ENCODE measurements at regions of chr3 and their contacts with region 1.

Region 1: DNA sequence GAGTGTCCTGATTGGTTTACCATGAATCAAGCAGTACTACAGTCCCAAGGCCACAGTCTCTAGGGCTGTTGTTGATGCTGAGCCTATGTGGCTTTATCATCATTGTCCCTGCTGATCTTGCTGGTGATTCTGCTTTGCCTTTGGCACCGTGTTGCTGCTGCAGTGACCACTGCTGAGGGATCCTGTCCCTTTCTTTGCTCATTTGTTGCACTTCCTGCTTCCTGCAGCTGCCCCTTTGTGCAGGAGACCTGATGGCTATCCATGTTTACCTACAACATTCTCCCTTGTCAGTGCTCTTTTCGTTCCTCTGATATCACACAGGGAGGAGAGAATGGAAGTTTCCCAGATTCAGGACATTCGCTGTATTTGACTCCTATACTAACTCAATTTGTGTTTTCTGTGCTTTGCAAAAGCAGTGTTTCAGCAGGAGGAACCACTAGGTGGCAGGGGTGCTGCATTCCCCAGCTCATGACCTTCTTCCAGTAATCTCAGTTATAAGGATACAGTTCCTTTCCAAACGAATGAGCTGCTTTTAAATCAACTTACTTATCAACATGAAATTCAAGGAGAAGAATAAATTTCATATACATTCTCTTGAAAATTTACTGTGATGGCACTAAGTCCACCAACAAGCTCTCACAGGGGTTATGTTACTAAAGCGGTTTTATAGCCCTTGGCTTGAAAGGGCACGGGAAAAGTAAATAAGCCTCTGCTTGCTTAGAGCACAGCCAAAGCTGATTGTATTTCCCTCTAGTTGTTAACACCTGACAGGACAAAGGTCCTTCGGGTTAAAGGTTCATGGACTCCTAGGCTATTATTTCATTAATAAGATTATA is 9.7 kb upstream of the THUMPD3 start:
- DNase-seq: peak; percentile 78
- H3K4me3 Mint-ChIP-seq: no peak overlapping the region
- H3K27ac Mint-ChIP-seq: peak overlapping the region; percentile 57
- H3K4me1 Mint-ChIP-seq: peaks cover 22% of the 10 kb centered on the region
- H3K27me3 Mint-ChIP-seq: no peaks in the 10 kb centered on the region

Region 2: DNA sequence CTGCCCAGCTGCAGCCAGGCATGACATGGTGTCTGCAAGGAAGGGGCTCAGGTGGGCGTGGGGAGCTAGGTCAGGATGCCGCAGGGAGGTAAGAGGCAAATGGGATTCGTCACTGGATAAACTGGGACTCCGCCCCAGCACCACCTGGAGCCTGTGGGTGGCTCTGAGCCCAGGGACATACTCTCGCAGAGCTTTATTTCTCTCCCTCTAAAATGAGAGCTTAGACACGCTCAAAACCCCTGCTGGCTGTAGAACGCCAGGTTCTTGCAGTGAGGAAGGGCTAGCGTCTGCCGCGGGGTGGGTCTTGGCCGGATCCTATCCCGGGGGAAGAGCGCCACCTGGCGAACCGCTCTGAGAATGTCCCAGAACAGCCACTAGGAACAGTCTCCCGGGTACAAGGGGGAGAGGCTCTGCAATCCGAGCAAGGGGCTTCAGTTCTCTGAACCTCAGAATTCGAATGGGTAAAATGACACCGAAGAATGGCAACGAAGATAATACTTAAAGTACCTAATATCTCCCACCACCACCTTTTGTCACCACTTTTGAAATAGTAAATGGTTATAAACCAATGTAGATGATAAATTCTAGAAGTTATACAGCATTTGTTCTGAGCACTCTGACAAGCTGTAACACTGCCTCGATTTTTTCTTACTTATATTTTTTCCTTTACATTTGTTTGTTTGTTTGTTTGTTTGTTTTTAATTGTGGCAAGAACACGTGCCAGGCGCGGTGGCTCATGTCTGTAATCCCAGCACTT is 50.5 kb before region 1 on chr3:
- CTCF ChIA-PET with region 1: no interaction called
- intact Hi-C with region 1: no loop called
- DNase-seq: peak; percentile 81
- H3K4me3 Mint-ChIP-seq: no peak overlapping the region
- H3K27ac Mint-ChIP-seq: no peak overlapping the region
- H3K4me1 Mint-ChIP-seq: peaks cover 16% of the 10 kb centered on the region
- H3K27me3 Mint-ChIP-seq: peaks cover 4% of the 10 kb centered on the region

Region 3: DNA sequence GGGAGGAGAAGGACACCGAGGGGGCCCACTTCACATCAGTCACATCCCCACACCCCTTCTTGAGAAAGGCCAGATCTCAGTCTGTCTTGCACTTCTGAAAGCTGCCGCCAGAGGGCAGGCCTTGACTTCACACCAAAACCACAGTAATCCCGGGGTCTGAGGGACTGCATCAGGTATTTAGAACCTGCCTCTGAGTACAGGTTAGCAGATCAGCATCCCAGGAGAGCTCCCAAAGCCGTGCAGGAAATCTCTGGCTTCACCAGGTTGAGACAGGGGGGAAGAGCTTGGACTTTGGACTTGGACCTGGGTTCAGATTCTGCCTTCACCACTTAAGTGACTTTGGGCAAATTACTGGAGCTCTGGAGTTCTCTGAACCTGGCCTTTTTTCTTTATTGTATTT is 150.1 kb after region 1 on chr3:
- CTCF ChIA-PET with region 1: interaction called, 6 read pairs
- intact Hi-C with region 1: loop called (anchors 1 kb)
- DNase-seq: peak; percentile 83
- H3K4me3 Mint-ChIP-seq: no peak overlapping the region
- H3K27ac Mint-ChIP-seq: no peak overlapping the region
- H3K4me1 Mint-ChIP-seq: peaks cover 6% of the 10 kb centered on the region
- H3K27me3 Mint-ChIP-seq: peaks cover 24% of the 10 kb centered on the region

Region 4: GRCh38 chr3:9552252-9552999 is 199.3 kb after region 1 on chr3:
- CTCF ChIA-PET with region 1: no interaction called
- intact Hi-C with region 1: loop called (anchors 1 kb)
- DNase-seq: peak; percentile 72
- H3K4me3 Mint-ChIP-seq: no peak overlapping the region
- H3K27ac Mint-ChIP-seq: no peak overlapping the region
- H3K4me1 Mint-ChIP-seq: peaks cover 11% of the 10 kb centered on the region
- H3K27me3 Mint-ChIP-seq: peaks cover 49% of the 10 kb centered on the region

Region 5: DNA sequence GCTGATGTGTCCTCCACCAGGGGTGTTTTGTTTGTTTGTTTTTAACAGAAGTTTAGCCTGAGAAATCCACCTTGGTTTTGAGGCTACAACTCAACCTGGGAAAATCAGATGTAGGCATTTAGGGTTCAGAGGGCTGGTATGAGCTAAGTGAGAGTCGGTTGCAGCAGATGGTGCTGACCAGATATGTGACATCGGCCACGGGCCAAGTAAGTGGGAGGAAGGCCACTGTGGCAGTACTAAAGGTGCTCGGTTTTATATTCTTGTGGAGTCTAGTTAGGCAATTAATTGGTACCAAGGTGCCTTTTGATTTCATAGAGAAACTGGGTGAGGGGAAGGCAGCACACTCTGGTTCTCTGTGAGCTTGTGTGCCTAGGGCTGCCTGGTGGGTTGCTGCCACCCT is 306.7 kb after region 1 on chr3:
- CTCF ChIA-PET with region 1: no interaction called
- intact Hi-C with region 1: no loop called
- DNase-seq: no peak
- H3K4me3 Mint-ChIP-seq: no peak overlapping the region
- H3K27ac Mint-ChIP-seq: no peak overlapping the region
- H3K4me1 Mint-ChIP-seq: peaks cover 8% of the 10 kb centered on the region
- H3K27me3 Mint-ChIP-seq: no peaks in the 10 kb centered on the region

Region 6: GRCh38 chr3:9769426-9770275 is 416.5 kb after region 1 on chr3 and contains the start of gene CAMK1:
- CTCF ChIA-PET with region 1: no interaction called
- intact Hi-C with region 1: no loop called
- DNase-seq: peak; percentile 79
- H3K4me3 Mint-ChIP-seq: peak within 1 kb of the TSS; percentile 75
- H3K27ac Mint-ChIP-seq: peak within 1 kb of the TSS; percentile 0
- H3K4me1 Mint-ChIP-seq: peaks cover 15% of the 10 kb centered on the region
- H3K27me3 Mint-ChIP-seq: no peaks in the 10 kb centered on the region
- total RNA-seq, gene CAMK1: 18.9 to 19.5 TPM

Region 7: GRCh38 chr3:9779721-9780457 is 426.8 kb after region 1 on chr3:
- CTCF ChIA-PET with region 1: no interaction called
- intact Hi-C with region 1: loop called (anchors 1 kb)
- DNase-seq: peak; percentile 47
- H3K4me3 Mint-ChIP-seq: no peak overlapping the region
- H3K27ac Mint-ChIP-seq: peak overlapping the region; percentile 91
- H3K4me1 Mint-ChIP-seq: peaks cover 56% of the 10 kb centered on the region
- H3K27me3 Mint-ChIP-seq: no peaks in the 10 kb centered on the region

Measured in activated naive CD4-positive, alpha-beta T cell treated with anti-CD3 and anti-CD28 coated beads for 36 hours (primary cell).